ENCODE measurements at regions of chr15 and their contacts with region 1.

Region 1: DNA sequence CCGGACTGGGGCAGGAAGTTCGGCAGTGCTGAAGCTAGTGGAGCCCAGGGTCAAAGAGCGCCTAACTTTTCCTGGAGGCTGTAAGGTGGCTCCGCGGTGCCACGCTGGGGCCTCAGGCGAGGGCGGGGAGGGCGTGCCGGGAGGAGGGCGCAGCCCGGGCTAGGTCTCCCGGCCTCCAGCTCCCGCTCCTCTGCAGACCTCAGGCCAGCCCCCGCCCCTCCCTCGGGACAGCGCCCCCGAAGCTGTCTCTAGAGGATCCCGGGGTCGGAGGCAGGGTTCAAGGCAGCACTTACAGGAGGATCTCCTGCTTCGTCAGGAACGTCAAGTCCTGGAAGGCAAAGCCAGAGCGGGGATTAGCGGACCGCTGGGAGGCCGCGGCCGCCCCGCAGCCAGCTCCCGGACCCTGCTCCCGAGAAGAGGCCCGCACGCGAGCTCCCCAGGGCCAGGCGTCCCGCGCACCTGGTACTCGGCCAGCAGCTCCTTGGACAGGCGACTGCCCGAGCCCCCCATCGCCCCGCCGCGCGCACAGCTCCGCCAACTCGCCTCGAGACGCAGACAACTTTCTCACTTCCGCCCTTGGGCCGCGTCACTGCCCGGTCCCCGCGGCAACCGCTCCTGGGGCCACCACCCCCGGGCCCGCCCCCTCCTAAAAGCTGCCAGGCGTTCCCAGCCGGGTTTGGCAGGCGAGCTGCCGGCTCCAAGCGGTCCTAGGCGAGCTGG is at the start of gene CIB1:
- DNase-seq: peak in 9 of 10 donors; percentile 91 to 98 (median 95)
- H3K4me3 ChIP-seq: peak within 1 kb of the TSS; percentile 55 to 98 (median 91)
- H3K27ac ChIP-seq: peak within 1 kb of the TSS; percentile 48 to 96 (median 90)
- H3K27me3 ChIP-seq: no peaks in the 10 kb centered on the region
- CTCF ChIP-seq: peak in 31 of 56 donors; percentile 2 to 56 (median 29)
- total RNA-seq, gene CIB1: 22.2 to 60.6 (median 33.3) TPM

Region 2: GRCh38 chr15:89750560-89751542 is 482.7 kb before region 1 on chr15 and contains the start of gene MESP1:
- intact Hi-C with region 1: loop called in 1 of 2 experiments (anchors 10 kb)
- DNase-seq: peak; percentile 76 to 94 (median 88)
- H3K4me3 ChIP-seq: peak within 1 kb of the TSS; percentile 65 to 92 (median 77)
- H3K27ac ChIP-seq: peak within 1 kb of the TSS in 50 of 59 donors; percentile 7 to 91 (median 74)
- H3K27me3 ChIP-seq: no peaks in the 10 kb centered on the region
- CTCF ChIP-seq: peak; percentile 34 to 85 (median 68)
- total RNA-seq, gene MESP1: 5.5 to 23.3 (median 13.3) TPM

Region 3: GRCh38 chr15:90191794-90192509 is 41.6 kb before region 1 on chr15:
- intact Hi-C with region 1: loop called in 1 of 2 experiments (anchors 5 kb)
- DNase-seq: peak; percentile 59 to 93 (median 86)
- H3K4me3 ChIP-seq: peak overlapping the region in 39 of 59 donors; percentile 2 to 56 (median 26)
- H3K27ac ChIP-seq: peak overlapping the region; percentile 40 to 97 (median 90)
- H3K27me3 ChIP-seq: no peaks in the 10 kb centered on the region
- CTCF ChIP-seq: peak in 30 of 56 donors; percentile 3 to 48 (median 20)

Region 4: DNA sequence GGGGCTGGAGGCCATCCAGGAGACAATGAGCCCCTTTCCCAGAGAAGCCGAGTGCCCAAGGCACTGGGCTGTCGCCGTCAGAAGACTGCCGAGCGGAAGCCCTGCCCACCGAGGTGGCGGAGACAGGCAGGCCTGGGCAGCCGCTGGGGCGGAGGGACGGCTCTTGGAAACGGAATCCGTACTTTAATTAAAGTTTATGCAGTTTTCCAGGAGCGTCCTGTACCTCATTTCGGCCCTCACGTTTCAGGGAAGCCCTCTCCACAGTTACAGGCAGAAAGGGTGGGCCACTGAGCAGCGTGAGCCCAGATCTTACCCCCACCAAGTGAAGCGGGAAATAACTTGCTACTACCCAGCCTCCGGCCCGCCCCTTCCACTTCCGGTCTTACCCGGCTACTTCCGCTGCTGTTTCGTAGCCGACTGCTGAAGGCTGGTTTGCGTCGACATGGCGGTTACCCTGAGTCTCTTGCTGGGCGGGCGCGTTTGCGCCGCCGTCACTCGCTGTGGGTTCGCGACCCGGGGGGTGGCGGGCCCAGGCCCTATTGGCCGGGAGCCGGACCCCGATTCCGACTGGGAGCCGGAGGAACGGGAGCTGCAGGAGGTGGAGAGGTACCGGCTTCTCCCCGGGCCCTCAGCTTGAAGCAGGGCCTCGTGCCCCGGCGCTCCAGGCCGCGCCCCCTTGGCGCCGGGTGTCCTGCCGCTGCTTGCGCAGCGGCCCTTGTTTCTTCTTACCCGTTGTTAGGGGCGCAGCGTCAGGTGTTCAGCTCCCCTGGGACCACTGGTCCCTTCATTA is 31.9 kb after region 1 on chr15 and contains the start of gene NGRN:
- intact Hi-C with region 1: loop called (anchors 2 to 5 kb)
- DNase-seq: peak; percentile 93 to 96 (median 94)
- H3K4me3 ChIP-seq: peak within 1 kb of the TSS; percentile 67 to 100 (median 92)
- H3K27ac ChIP-seq: peak within 1 kb of the TSS; percentile 68 to 99 (median 94)
- H3K27me3 ChIP-seq: no peaks in the 10 kb centered on the region
- CTCF ChIP-seq: peak in 30 of 56 donors; percentile 8 to 60 (median 26)
- total RNA-seq, gene NGRN: 106 to 361 (median 278) TPM